HCT116 (cell line): ENCODE measurements at regions of chr18 and their contacts with region 1.

Region 1: GRCh38 chr18:76492669-76493212 is 2.3 kb downstream of the ZNF516 start:
- DNase-seq: peak; percentile 97
- ATAC-seq: peak; percentile 66
- H3K4me3 ChIP-seq: peak overlapping the region; percentile 68 to 76
- H3K27ac ChIP-seq: peak overlapping the region; percentile 47
- H3K4me1 ChIP-seq: peaks cover 0 to 37% of the 10 kb centered on the region in 2 experiments; a peak in 2 of 4 replicates
- H3K27me3 ChIP-seq: no peaks in the 10 kb centered on the region
- CTCF ChIP-seq: no peak
- POLR2A ChIP-seq: peak; percentile 53
- RAD21 ChIP-seq: no peak

Region 2: GRCh38 chr18:76558881-76559678 is 66.3 kb after region 1 on chr18:
- CTCF ChIA-PET with region 1: no interaction called
- POLR2A ChIA-PET with region 1: no interaction called
- RAD21 ChIA-PET with region 1: no interaction called
- intact Hi-C with region 1: loop called (anchors 5 kb)
- DNase-seq: peak; percentile 73
- ATAC-seq: peak; percentile 86
- H3K4me3 ChIP-seq: peak overlapping the region; percentile 30 to 52
- H3K27ac ChIP-seq: peak overlapping the region; percentile 37; the same call in 1 of the 2 replicates
- H3K4me1 ChIP-seq: peaks cover 9 to 43% of the 10 kb centered on the region in 2 experiments; a peak in 3 of 4 replicates
- H3K27me3 ChIP-seq: no peaks in the 10 kb centered on the region
- CTCF ChIP-seq: no peak
- POLR2A ChIP-seq: no peak
- RAD21 ChIP-seq: peak; percentile 26; the same call in 1 of the 2 replicates

Region 3: GRCh38 chr18:76620321-76621170 is 127.8 kb after region 1 on chr18:
- CTCF ChIA-PET with region 1: no interaction called
- POLR2A ChIA-PET with region 1: no interaction called
- RAD21 ChIA-PET with region 1: no interaction called
- intact Hi-C with region 1: loop called (anchors 5 kb)
- DNase-seq: peak; percentile 34
- ATAC-seq: peak; percentile 95
- H3K4me3 ChIP-seq: no peak overlapping the region
- H3K27ac ChIP-seq: no peak overlapping the region
- H3K4me1 ChIP-seq: peaks cover 5 to 14% of the 10 kb centered on the region in 2 experiments; a peak in 3 of 4 replicates
- H3K27me3 ChIP-seq: no peaks in the 10 kb centered on the region
- CTCF ChIP-seq: peak; percentile 38 to 57 (median 38); a peak in 5 of 6 replicates
- POLR2A ChIP-seq: no peak
- RAD21 ChIP-seq: peak; percentile 68